ENCODE measurements at regions of chrX and their contacts with region 1.

Region 1: DNA sequence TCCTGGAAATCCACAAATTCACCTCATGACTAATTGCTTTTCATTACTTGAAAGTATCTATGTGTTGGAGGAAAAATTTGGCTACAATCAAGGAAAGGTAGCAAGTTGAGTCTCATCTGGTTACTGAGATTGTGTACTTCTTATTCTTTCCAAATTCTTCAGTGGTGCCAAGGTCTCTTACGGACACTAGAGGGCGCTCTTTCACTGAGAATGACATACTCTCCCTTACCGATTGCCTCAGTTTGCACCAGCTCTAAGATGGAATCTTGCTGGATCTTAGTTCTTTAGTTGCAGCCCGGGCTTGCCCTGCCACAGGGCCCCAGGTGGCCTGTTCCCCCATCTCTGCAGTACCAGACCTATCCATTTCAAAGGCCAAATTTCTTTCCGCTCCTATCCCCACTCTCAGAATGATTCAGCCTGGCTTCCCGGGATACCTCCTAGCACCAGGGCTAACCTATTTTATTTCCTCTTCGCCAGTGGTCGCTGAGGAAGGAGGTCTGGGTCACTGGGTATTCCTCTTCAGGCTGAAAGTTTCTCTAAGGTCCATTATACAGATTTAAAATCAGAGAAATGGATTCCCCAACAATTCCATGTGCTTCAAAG is 24.6 kb upstream of the GPR50 start:
- DNase-seq: peak; percentile 31 to 41 (median 38)
- H3K4me3 ChIP-seq: no peak overlapping the region
- H3K4me3 Mint-ChIP-seq: no peak overlapping the region
- H3K27ac ChIP-seq: no peak overlapping the region
- H3K27ac Mint-ChIP-seq: no peak overlapping the region
- H3K4me1 ChIP-seq: no peaks in the 10 kb centered on the region
- H3K4me1 Mint-ChIP-seq: no peaks in the 10 kb centered on the region
- H3K27me3 ChIP-seq: no peaks in the 10 kb centered on the region
- H3K27me3 Mint-ChIP-seq: peaks cover 3 to 15% of the 10 kb centered on the region in 2 donors

Region 2: DNA sequence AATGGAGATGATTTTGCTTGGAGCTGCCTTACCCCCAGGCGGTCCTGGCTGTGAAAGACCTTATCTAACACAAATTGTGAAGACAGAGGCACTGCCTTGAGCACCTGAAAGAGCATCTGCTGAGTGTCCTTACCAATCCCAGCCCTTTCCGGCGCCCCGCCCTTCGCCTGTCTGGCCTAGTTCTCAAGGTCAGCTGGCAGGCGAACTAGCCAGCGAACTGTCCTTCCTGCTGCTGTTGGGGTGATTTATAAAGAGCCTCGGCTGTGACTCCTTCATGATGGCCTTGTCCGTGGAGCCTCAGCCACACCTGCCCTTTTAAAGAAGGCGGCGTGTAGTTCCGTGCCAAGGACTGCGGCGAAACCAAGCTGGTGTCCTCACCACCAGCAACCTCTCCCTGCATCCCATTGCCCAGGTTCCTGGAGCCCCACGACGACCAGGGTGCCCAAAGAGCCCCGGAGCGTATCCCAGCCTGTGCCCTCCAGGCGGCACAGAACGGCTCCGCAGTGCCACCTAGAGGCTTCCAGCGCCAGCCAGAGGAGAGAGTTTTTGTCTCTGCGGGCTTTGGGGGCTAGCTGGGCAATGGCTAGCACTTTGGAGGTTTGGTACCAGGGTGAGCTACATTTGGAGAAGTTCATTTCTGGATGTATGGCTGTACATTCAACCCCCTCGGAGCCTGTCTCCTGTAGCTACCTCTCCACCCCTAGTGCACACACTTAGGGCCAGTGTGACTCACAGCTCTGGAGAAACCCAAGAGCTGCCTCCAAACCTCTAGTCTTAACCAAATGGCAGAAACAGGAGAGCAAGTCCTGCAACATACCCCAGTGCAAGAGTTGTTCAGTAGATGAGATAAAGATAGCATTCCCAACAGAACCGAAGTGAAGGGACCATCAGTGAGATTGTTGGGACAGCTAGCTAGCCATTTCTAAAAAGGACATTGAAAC is 208.4 kb after region 1 on chrX:
- CTCF ChIA-PET with region 1: interaction called, 6 read pairs
- POLR2A ChIA-PET with region 1: no interaction called
- intact Hi-C with region 1: loop called (anchors 1 kb)
- DNase-seq: peak in 4 of 5 donors; percentile 15 to 29 (median 24)
- H3K4me3 ChIP-seq: peak overlapping the region in 1 of 2 donors; percentile 24
- H3K4me3 Mint-ChIP-seq: peak overlapping the region; percentile 25 to 73 (median 68)
- H3K27ac ChIP-seq: no peak overlapping the region
- H3K27ac Mint-ChIP-seq: peak overlapping the region in 2 of 7 donors; percentile 9 to 45
- H3K4me1 ChIP-seq: peaks cover 3% of the 10 kb centered on the region
- H3K4me1 Mint-ChIP-seq: peaks cover 0 to 6% (median 0%) of the 10 kb centered on the region in 4 donors
- H3K27me3 ChIP-seq: no peaks in the 10 kb centered on the region
- H3K27me3 Mint-ChIP-seq: peaks cover 0 to 14% of the 10 kb centered on the region in 2 donors

Region 3: DNA sequence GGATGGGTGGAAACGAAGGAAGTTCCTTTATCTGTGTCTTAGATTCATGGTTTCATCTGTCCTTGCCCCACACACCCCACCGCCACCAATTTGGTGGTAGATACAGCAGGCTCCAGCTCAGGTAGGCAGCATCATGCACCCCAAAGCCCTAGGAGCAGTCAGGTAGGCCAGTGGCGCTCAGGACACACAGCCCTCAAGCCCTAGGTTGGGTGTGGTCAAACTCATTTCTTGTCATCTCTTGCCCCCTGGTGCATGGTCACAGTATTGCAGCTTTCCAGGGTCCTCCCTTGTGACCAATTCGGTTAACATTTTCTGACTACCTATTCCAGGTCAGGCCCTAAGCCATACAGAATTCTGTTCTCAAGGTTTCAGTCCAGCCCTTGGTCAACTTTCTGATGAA is 529.0 kb after region 1 on chrX:
- CTCF ChIA-PET with region 1: interaction called, 10 read pairs
- POLR2A ChIA-PET with region 1: no interaction called
- intact Hi-C with region 1: no loop called
- DNase-seq: peak; percentile 28 to 47 (median 37)
- H3K4me3 ChIP-seq: no peak overlapping the region
- H3K4me3 Mint-ChIP-seq: no peak overlapping the region
- H3K27ac ChIP-seq: no peak overlapping the region
- H3K27ac Mint-ChIP-seq: no peak overlapping the region
- H3K4me1 ChIP-seq: no peaks in the 10 kb centered on the region
- H3K4me1 Mint-ChIP-seq: peaks cover 0 to 2% (median 0%) of the 10 kb centered on the region in 4 donors
- H3K27me3 ChIP-seq: no peaks in the 10 kb centered on the region
- H3K27me3 Mint-ChIP-seq: peaks cover 1 to 7% of the 10 kb centered on the region in 2 donors

Region 4: GRCh38 chrX:152632445-152633097 is 1480.8 kb after region 1 on chrX:
- CTCF ChIA-PET with region 1: interaction called, 11 read pairs
- POLR2A ChIA-PET with region 1: no interaction called
- intact Hi-C with region 1: no loop called
- DNase-seq: peak in 4 of 5 donors; percentile 3 to 21 (median 20)
- H3K4me3 ChIP-seq: no peak overlapping the region
- H3K4me3 Mint-ChIP-seq: no peak overlapping the region
- H3K27ac ChIP-seq: no peak overlapping the region
- H3K27ac Mint-ChIP-seq: no peak overlapping the region
- H3K4me1 ChIP-seq: no peaks in the 10 kb centered on the region
- H3K4me1 Mint-ChIP-seq: no peaks in the 10 kb centered on the region
- H3K27me3 ChIP-seq: no peaks in the 10 kb centered on the region
- H3K27me3 Mint-ChIP-seq: peaks cover 5 to 15% of the 10 kb centered on the region in 2 donors

Measured in CD4-positive, alpha-beta memory T cell (primary cell).